ENCODE measurements at regions of chr6 and their contacts with region 1.

Region 1: DNA sequence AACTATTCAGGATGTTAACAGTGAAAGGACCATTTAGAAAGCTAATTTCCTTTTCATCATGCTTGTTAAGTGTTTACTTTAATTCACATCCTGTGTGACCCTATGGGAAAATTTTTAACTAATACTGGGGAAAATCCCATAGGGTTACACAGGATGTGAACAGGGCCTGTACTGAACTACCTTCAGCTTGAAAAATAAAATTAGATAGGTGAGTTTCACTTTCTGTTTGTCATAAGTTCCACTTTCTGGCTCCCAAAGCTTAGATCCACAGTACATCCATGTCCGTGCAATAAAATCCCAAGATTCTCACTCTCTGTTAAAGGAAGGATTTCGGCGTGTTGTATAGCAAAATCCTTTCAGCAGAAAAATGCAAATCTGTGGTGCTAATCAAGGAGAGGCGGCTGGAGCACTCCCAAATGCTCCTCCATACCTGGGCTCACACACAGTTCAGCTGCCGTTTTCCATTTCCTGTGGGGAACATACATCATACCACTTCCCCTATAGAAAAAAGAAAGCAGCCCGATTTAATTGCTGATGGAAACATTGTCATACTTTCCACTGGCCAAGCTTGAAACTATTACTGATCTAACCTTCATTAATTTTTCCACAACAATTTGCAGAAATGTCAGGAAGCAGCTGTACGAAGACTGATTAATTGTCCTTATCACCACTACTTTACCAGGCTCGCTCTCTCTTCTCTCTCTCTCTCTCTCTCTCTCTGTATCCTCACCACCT is 125.2 kb downstream of the HIVEP2 start:
- DNase-seq: peak in 1 of 4 donors; percentile 55
- ATAC-seq: peak; percentile 75
- H3K4me3 ChIP-seq: peak overlapping the region; percentile 18 to 36
- H3K27ac ChIP-seq: peak overlapping the region; percentile 69 to 73
- H3K4me1 ChIP-seq: peaks cover 28 to 30% of the 10 kb centered on the region in 2 donors
- H3K27me3 ChIP-seq: no peaks in the 10 kb centered on the region
- CTCF ChIP-seq: no peak

Region 2: GRCh38 chr6:142946181-142946923 is 126.6 kb after region 1 on chr6:
- intact Hi-C with region 1: loop called in 1 of 2 experiments (anchors 10 kb)
- DNase-seq: peak; percentile 97 to 99 (median 98)
- ATAC-seq: peak; percentile 82
- H3K4me3 ChIP-seq: peak overlapping the region; percentile 80 to 81
- H3K27ac ChIP-seq: peak overlapping the region; percentile 96 to 99
- H3K4me1 ChIP-seq: peaks cover 11 to 30% of the 10 kb centered on the region in 2 donors
- H3K27me3 ChIP-seq: no peaks in the 10 kb centered on the region
- CTCF ChIP-seq: no peak

Region 3: GRCh38 chr6:143734641-143735063 is 914.9 kb after region 1 on chr6:
- intact Hi-C with region 1: no loop called
- DNase-seq: no peak
- ATAC-seq: peak; percentile 70
- H3K4me3 ChIP-seq: no peak overlapping the region
- H3K27ac ChIP-seq: peak overlapping the region in 1 of 2 donors; percentile 19
- H3K4me1 ChIP-seq: peaks cover 9 to 54% of the 10 kb centered on the region in 2 donors
- H3K27me3 ChIP-seq: no peaks in the 10 kb centered on the region
- CTCF ChIP-seq: no peak